H1 (cell line): ENCODE measurements at regions of chr11 and their contacts with region 1.

Region 1: DNA sequence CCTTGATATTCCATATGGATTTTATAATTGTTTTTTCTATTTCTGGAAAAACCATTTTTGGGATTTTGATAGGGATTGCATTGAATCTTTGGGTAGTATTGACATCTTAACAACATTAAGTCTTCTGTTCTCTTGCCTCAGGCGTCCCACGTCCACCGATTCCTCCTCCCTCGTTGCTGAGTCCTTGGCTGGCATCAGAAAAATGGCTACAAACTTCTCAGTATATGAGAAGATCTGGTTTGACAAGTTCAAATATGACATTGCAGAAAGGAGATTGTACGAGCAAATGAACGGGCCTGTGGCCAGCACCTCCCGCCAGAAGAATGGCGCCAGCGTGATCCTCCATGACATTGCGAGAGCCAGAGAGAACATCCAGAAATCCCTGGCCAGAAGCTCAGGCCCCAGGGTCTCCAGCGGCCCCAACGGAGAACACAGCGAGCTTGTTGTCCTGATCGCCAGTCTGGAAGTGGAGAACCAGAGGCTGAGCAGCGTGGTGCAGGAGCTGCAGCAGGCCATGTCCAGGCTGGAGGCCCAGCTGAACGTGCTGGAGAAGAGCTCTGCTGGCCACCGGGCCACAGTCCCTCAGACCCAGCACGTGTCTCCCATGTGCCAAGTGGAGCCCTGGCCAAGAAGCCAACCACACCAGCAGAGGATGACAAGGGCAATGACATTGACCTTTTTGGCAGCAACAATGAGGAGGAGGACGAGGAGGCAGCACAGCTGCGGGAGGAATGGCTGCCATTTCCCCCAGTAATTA is 20.7 kb upstream of the SCGB1D1 start:
- DNase-seq: no peak
- H3K4me3 ChIP-seq: no peak overlapping the region
- H3K27ac ChIP-seq: no peak overlapping the region
- H3K4me1 ChIP-seq: no peaks in the 10 kb centered on the region
- H3K27me3 ChIP-seq: no peaks in the 10 kb centered on the region
- CTCF ChIP-seq: no peak
- EP300 ChIP-seq: no peak
- POLR2A ChIP-seq: no peak
- RAD21 ChIP-seq: no peak

Region 2: DNA sequence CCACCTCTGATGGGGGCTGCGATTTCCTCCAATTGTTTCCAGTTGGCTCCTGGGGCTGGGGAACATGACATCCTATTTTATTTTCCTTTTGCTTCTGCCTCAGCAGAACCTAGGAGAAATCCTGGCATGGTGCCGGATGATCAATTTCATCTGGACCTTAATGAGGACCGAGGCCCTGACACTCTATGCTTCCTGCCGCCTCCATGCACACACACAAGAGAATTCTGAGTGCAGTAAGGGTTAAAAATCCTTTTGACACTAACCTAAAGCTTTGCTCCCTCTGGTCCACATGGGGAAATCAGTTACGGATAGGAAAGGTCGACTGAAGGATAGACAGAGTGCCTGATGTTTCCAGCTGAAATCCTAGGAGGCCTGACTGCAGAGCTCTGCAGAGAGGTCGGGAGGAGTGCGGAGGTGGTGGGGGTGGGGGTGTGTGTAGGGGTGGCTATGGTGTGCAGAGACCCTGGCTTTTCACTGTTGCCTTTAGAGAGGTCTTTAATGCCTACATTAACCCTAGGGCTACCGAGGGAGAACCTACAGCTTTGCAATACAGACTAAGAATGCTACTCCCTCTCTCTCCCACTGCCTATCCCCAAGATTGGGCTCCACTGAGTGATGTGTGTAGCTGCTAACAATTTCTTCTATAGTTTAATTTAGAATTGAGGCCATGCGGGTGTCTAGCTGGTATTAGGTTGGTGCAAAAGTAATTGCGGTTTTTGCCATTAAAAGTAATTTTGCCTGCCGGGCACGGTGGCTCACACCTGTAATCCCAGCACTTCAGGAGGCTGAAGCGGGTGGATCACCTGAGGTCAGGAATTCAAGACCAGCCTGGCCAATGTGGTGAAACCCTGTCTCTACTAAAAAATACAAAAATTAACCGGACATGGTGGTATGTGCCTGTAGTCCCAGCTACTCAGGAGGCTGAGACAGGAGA is 99.0 kb before region 1 on chr11:
- CTCF ChIA-PET with region 1: no interaction called
- POLR2A ChIA-PET with region 1: no interaction called
- DNase-seq: no peak
- H3K4me3 ChIP-seq: no peak overlapping the region
- H3K27ac ChIP-seq: no peak overlapping the region
- H3K4me1 ChIP-seq: no peaks in the 10 kb centered on the region
- H3K27me3 ChIP-seq: no peaks in the 10 kb centered on the region
- CTCF ChIP-seq: no peak
- EP300 ChIP-seq: no peak
- POLR2A ChIP-seq: no peak
- RAD21 ChIP-seq: no peak

Region 3: DNA sequence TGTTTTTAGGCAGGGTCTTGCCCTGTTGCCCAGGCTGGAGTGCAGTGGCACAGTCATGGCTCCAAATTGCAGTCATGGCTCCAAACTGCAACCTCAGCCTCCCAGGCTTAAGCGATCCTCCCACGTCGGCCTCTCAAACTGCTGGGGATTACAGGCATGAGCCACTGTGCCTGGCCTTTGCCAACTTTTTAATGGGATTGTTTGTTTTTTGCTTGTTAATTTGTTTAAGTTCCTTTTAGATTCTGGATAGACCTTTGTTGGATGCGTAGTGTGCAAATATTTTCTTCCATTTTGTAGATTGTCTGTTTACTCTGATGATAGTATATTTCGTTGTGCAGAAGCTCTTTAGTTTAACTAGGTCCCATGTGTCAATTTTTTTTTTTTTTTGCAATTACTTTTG is 10.7 kb after region 1 on chr11:
- CTCF ChIA-PET with region 1: interaction called, 11 read pairs
- POLR2A ChIA-PET with region 1: no interaction called
- DNase-seq: no peak
- H3K4me3 ChIP-seq: no peak overlapping the region
- H3K27ac ChIP-seq: no peak overlapping the region
- H3K4me1 ChIP-seq: no peaks in the 10 kb centered on the region
- H3K27me3 ChIP-seq: no peaks in the 10 kb centered on the region
- CTCF ChIP-seq: no peak
- EP300 ChIP-seq: no peak
- POLR2A ChIP-seq: no peak
- RAD21 ChIP-seq: no peak

Region 4: DNA sequence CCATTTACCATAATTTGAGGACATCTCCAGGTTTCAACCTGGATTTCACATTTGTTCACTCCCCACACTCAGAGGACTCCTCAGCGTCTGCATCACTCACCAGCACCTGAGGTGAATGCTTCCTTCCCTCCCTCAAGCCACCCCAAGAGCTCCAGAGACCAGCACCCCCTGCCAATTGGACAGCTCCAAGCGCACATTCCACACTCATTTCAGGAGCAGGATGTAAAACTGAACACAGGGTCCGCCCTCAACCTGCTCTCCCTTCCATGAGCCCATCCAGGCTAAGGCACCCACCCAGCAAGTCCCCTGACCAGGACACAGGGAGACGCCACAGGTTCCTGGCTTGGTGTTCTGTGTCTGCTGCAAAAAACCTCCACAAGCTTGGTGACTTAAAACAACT is 24.7 kb after region 1 on chr11:
- CTCF ChIA-PET with region 1: interaction called, 14 read pairs
- POLR2A ChIA-PET with region 1: no interaction called
- DNase-seq: peak in 1 of 2 experiments; percentile 65
- H3K4me3 ChIP-seq: no peak overlapping the region
- H3K27ac ChIP-seq: no peak overlapping the region
- H3K4me1 ChIP-seq: peaks cover 0 to 4% (median 3%) of the 10 kb centered on the region in 4 experiments; a peak in 2 of 7 replicates
- H3K27me3 ChIP-seq: no peaks in the 10 kb centered on the region
- CTCF ChIP-seq: no peak
- EP300 ChIP-seq: no peak
- POLR2A ChIP-seq: no peak
- RAD21 ChIP-seq: no peak

Region 5: GRCh38 chr11:62208785-62209144 is 39.5 kb after region 1 on chr11:
- CTCF ChIA-PET with region 1: interaction called, 35 read pairs
- POLR2A ChIA-PET with region 1: no interaction called
- DNase-seq: no peak
- H3K4me3 ChIP-seq: no peak overlapping the region
- H3K27ac ChIP-seq: no peak overlapping the region
- H3K4me1 ChIP-seq: no peaks in the 10 kb centered on the region
- H3K27me3 ChIP-seq: no peaks in the 10 kb centered on the region
- CTCF ChIP-seq: no peak
- EP300 ChIP-seq: no peak
- POLR2A ChIP-seq: no peak
- RAD21 ChIP-seq: no peak